ENCODE measurements at regions of chr9 and their contacts with region 1.

Region 1: GRCh38 chr9:37422289-37423104 is at the start of gene GRHPR:
- DNase-seq: peak; percentile 93
- H3K4me3 ChIP-seq: peak within 1 kb of the TSS; percentile 72 to 91 (median 76)
- H3K27ac ChIP-seq: peak within 1 kb of the TSS; percentile 87 to 93 (median 88)
- H3K4me1 ChIP-seq: peaks cover 0 to 38% (median 31%) of the 10 kb centered on the region in 4 donors
- H3K27me3 ChIP-seq: no peaks in the 10 kb centered on the region
- CTCF ChIP-seq: no peak
- EP300 ChIP-seq: no peak
- POLR2A ChIP-seq: peak; percentile 52 to 67
- total RNA-seq, gene GRHPR: 127 to 165 (median 157) TPM

Region 2: GRCh38 chr9:37405350-37405749 is 17.1 kb before region 1 on chr9:
- intact Hi-C with region 1: no loop called
- DNase-seq: no peak
- H3K4me3 ChIP-seq: no peak overlapping the region
- H3K27ac ChIP-seq: no peak overlapping the region
- H3K4me1 ChIP-seq: no peaks in the 10 kb centered on the region
- H3K27me3 ChIP-seq: no peaks in the 10 kb centered on the region
- CTCF ChIP-seq: no peak
- EP300 ChIP-seq: no peak
- POLR2A ChIP-seq: no peak

Region 3: GRCh38 chr9:37465249-37466036 is 42.9 kb after region 1 on chr9 and contains the start of gene ZBTB5:
- intact Hi-C with region 1: loop called (anchors 5 kb)
- DNase-seq: peak; percentile 100
- H3K4me3 ChIP-seq: peak within 1 kb of the TSS; percentile 82 to 99 (median 88)
- H3K27ac ChIP-seq: peak within 1 kb of the TSS; percentile 99 to 100 (median 100)
- H3K4me1 ChIP-seq: peaks cover 0 to 44% (median 39%) of the 10 kb centered on the region in 4 donors
- H3K27me3 ChIP-seq: no peaks in the 10 kb centered on the region
- CTCF ChIP-seq: no peak
- EP300 ChIP-seq: peak in 1 of 4 donors; percentile 25
- POLR2A ChIP-seq: peak; percentile 80 to 89
- total RNA-seq, gene ZBTB5: 7.2 to 11.1 (median 10.2) TPM

Region 4: DNA sequence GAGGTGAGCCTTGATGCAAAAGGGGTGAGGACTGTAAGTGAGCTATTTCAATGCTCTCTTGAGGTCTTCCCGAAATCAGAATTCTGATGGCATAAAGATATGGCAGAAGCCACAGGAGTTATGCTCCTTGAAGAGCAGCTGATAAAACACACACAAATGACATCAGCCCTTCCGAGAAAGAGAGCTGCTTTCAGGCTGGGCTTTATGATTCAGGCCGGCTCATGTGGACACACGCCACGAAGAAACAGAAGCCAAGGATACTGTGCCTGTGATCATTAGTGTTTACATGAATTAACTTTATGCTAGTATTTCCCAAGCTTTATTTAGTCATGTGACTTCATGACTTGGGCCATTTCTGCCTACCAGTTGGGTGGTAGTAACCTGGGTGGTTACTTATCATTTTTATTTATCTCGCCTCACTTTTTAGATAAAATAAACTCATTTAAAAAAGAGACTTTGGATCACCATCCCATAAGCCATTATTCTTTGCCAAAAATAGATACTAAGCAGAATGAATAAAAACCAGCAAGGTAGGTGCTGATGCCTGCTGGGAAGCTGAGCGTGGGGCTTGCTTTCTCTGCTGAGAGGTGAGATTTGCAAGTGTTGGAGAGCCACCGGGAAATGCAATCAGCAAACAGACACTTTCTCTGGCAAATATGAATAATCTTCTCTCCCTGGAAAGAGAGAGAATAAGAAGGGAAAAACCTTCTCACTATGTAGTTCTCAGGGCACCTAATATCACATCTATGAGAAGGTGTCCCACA is 554.4 kb after region 1 on chr9:
- intact Hi-C with region 1: no loop called
- DNase-seq: peak; percentile 78
- H3K4me3 ChIP-seq: no peak overlapping the region
- H3K27ac ChIP-seq: peak overlapping the region in 2 of 4 donors; percentile 73 to 76
- H3K4me1 ChIP-seq: peaks cover 2 to 22% (median 16%) of the 10 kb centered on the region in 4 donors
- H3K27me3 ChIP-seq: no peaks in the 10 kb centered on the region
- CTCF ChIP-seq: no peak
- EP300 ChIP-seq: peak in 2 of 4 donors; percentile 25 to 47
- POLR2A ChIP-seq: no peak